HCT116 (cell line): ENCODE measurements at regions of chr17 and their contacts with region 1.

Region 1: GRCh38 chr17:44203731-44204452 is 4.2 kb upstream of the ATXN7L3 start:
- DNase-seq: no peak
- ATAC-seq: no peak
- H3K4me3 ChIP-seq: peak overlapping the region in 1 of 2 experiments; percentile 10; a peak in 1 of 4 replicates
- H3K27ac ChIP-seq: peak overlapping the region; percentile 71
- H3K4me1 ChIP-seq: peaks cover 44 to 66% of the 10 kb centered on the region in 2 experiments
- H3K27me3 ChIP-seq: no peaks in the 10 kb centered on the region
- CTCF ChIP-seq: peak; percentile 49 to 82 (median 75); a peak in 5 of 6 replicates
- POLR2A ChIP-seq: no peak
- RAD21 ChIP-seq: peak; percentile 55

Region 2: DNA sequence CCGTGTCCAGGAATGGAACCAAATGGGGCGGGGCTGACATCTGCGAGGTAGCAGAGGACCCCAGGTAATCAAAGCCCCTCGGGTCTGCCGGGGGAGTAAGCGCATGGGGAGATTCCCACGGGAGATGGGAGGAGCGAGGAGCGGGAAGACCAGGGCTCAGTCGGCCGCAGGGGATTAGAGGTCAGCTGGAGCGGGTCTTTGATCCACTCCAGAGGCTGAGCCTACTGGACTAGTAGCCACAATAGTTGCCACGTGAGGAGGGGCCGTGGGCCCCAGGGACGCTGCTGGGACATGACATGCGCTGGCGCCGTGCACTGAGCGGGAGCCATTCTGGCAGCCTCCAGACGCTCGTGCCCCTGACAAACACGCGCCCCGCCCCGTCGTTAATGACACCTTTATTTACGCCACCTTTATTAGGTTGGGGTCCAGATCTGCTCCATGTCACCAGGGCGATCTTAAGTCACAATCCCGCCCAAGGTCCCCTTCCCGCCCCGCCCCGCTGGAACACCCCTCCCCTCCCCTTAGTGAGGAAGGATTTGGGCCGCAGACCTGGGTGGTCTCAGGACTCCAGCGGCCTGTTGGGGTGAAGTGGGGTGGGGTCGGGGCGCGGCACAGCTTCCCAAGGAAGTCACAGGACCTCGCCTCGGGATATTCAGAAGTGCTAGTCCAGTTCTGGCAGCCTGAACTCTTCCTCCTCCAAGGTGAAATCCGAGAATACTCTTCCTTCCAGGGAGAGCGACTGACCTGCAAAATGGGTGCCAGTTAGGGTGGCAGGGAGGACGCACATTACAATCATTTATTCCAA is 276.6 kb before region 1 on chr17:
- CTCF ChIA-PET with region 1: no interaction called
- POLR2A ChIA-PET with region 1: no interaction called
- RAD21 ChIA-PET with region 1: no interaction called
- intact Hi-C with region 1: no loop called
- DNase-seq: no peak
- ATAC-seq: no peak
- H3K4me3 ChIP-seq: no peak overlapping the region
- H3K27ac ChIP-seq: no peak overlapping the region
- H3K4me1 ChIP-seq: no peaks in the 10 kb centered on the region
- H3K27me3 ChIP-seq: no peaks in the 10 kb centered on the region
- CTCF ChIP-seq: no peak
- POLR2A ChIP-seq: no peak
- RAD21 ChIP-seq: no peak

Region 3: GRCh38 chr17:44137891-44138709 is 65.8 kb before region 1 on chr17:
- CTCF ChIA-PET with region 1: no interaction called
- POLR2A ChIA-PET with region 1: no interaction called
- RAD21 ChIA-PET with region 1: no interaction called
- intact Hi-C with region 1: no loop called
- DNase-seq: peak; percentile 95
- ATAC-seq: peak; percentile 84
- H3K4me3 ChIP-seq: peak overlapping the region; percentile 28 to 57
- H3K27ac ChIP-seq: peak overlapping the region; percentile 67
- H3K4me1 ChIP-seq: peaks cover 28 to 38% of the 10 kb centered on the region in 2 experiments
- H3K27me3 ChIP-seq: no peaks in the 10 kb centered on the region
- CTCF ChIP-seq: no peak
- POLR2A ChIP-seq: peak; percentile 37
- RAD21 ChIP-seq: no peak

Region 4: DNA sequence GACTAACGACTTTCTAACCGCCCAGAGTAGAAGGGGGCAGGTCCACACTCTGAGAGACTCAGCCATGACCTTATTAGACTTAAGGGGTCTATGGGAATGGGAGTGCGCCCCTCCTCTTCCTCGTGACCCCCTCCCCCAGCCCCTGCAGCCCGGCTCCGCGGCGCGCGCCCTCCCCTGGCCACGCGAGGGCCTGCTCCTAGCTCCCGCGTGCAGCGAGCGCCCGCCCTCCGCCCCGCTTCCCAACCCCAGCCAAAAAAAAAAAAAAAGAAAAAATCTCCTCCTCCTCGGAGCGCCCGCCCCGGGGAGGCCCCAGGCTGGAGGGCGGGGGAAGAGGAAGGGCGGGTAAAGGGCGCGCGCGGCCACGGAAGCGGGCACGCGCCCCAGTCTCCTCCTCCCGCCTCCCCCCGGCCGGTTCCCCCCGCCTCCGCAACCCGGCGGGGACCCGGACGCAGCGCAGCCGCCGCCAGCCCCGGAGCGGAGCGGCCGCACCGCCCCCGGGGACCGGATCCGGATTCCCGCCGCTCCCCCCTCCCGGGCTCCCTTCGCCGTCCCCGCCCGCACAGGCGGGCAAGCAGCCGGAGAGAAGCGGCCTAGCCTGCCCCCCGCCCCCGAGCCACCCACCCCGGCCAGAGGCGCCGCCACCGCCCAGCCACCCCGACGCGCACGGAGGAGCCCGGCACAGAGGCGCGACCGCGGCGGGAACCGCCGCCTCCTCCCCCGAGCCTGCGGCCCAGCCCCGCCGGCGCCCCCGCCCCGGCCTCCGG is 14.6 kb after region 1 on chr17:
- CTCF ChIA-PET with region 1: interaction called, 17 read pairs
- POLR2A ChIA-PET with region 1: interaction called, 4 read pairs
- RAD21 ChIA-PET with region 1: no interaction called
- intact Hi-C with region 1: no loop called
- DNase-seq: peak; percentile 74
- ATAC-seq: peak; percentile 51
- H3K4me3 ChIP-seq: peak overlapping the region; percentile 71 to 73
- H3K27ac ChIP-seq: peak overlapping the region; percentile 100
- H3K4me1 ChIP-seq: peaks cover 21 to 37% of the 10 kb centered on the region in 2 experiments
- H3K27me3 ChIP-seq: no peaks in the 10 kb centered on the region
- CTCF ChIP-seq: peak; percentile 36 to 60 (median 52); a peak in 4 of 6 replicates
- POLR2A ChIP-seq: no peak
- RAD21 ChIP-seq: no peak; the same call in 1 of the 2 replicates

Region 5: DNA sequence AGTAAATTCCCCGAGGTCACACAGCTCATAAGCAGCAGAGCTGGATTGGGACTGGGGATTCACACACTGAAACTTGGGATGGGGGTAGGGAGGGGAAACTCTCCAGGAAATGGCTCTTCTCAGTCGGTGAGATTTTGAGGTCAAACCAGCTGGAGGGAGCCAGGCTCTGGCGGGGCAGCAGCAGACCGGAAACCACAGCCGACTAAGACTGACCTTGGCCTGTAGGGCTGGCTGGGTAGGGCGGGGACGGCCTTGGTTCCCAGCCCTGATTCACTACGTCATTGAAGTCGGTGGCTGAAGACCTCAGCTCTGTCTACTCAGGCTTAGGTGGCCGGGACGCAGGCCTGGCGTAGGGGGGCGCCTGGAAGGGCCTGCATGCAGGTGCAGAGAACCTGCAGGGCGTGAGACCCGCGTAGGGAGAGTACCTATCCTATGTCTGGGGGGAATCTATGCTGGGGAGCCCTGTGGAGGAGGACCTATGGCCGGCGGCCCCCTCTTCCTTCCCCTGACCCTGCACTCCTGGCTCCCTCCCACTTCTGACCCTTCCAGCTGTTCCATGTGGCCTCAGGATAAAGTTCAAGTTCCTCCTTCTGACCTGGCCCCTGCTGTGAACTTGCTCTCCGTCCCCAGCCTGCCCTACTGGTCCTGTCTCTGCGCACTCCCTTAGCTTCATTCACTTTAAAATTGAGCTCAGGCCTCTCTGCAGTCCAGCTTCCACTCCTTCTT is 75.9 kb after region 1 on chr17:
- CTCF ChIA-PET with region 1: no interaction called
- POLR2A ChIA-PET with region 1: no interaction called
- RAD21 ChIA-PET with region 1: no interaction called
- intact Hi-C with region 1: no loop called
- DNase-seq: no peak
- ATAC-seq: peak; percentile 69
- H3K4me3 ChIP-seq: no peak overlapping the region
- H3K27ac ChIP-seq: no peak overlapping the region
- H3K4me1 ChIP-seq: peaks cover 0 to 11% of the 10 kb centered on the region in 2 experiments; a peak in 2 of 4 replicates
- H3K27me3 ChIP-seq: no peaks in the 10 kb centered on the region
- CTCF ChIP-seq: no peak
- POLR2A ChIP-seq: no peak
- RAD21 ChIP-seq: no peak

Region 6: DNA sequence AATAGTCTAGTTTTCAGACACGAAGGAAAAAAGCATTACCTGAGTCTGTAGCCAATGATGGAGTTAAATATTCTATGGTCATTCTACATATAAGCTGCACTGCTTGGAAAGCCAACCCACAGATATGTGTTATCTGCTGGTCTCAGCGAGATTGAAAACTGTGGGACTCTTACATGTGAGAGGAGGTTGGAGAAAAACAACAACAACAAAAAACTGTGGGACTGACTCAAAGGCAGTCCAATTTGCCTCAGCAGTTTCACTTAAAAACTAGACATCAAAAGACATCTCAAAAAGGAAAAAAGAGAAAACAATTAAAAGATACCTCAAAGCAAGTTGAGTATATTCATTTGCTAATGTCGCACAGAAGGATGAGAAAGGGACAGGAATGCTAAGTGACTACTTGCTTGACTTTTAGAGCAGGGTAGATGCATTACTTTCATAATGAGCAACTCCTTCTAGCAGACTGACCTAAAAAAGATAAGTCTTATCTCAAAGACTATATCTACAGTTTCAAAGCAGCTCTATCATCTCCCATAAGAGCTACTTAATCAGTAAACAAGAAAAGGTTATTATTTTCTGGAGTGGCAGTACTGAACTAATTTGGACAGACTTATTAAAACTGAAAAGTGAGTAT is 221.1 kb after region 1 on chr17:
- CTCF ChIA-PET with region 1: no interaction called
- POLR2A ChIA-PET with region 1: no interaction called
- RAD21 ChIA-PET with region 1: no interaction called
- intact Hi-C with region 1: no loop called
- DNase-seq: no peak
- ATAC-seq: no peak
- H3K4me3 ChIP-seq: no peak overlapping the region
- H3K27ac ChIP-seq: no peak overlapping the region
- H3K4me1 ChIP-seq: no peaks in the 10 kb centered on the region
- H3K27me3 ChIP-seq: no peaks in the 10 kb centered on the region
- CTCF ChIP-seq: no peak
- POLR2A ChIP-seq: no peak
- RAD21 ChIP-seq: no peak